ENCODE measurements at regions of chr7 and their contacts with region 1.

Region 1: DNA sequence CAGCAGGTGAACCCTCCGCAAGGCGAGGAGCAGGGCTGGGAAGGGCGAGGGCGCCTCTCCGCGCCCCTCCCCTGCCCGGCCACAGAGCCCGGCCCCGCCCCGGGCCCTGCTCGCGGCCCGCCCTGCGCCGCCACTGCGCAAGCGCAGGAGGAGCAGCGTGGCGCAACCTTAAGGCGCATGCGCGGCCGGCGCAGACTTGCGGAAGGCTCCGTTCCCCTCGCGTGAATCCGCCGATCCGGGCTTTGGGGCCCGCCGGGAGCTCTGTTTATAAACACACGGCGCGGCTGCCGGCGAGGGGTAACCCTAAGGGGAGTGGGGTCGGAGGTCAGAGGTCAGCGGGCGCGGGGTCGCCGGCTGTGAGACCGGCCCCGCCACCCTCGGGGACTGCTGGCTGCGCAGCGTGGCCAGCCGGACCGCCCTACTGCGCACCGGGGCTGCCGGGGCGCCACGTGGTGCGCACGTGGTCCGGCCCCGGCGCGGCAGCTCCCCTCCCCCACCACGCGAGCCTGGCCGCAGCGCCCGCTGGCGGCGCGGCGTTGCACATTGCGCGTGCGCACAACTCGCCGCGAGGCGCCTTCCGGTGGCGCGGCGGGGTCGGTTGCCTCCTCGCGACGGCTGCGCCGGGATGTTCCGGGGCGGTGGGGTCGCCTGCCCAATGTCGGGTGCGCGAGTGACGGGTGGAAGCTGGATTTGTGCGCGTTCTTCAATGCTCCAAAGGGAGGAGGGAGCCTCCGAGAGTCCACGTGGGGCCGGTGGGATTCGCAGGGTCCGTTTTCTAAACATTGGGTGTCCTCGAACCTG is 40.2 kb upstream of the FOXK1 start:
- DNase-seq: peak; percentile 96
- ATAC-seq: peak; percentile 97 to 98

Region 2: GRCh38 chr7:4744391-4745264 is 102.8 kb after region 1 on chr7:
- intact Hi-C with region 1: loop called in 1 of 2 experiments (anchors 5 kb)
- DNase-seq: peak; percentile 99
- ATAC-seq: peak; percentile 94 to 95

Region 3: GRCh38 chr7:4973728-4974198 is 331.9 kb after region 1 on chr7:
- intact Hi-C with region 1: no loop called
- DNase-seq: peak; percentile 93
- ATAC-seq: peak; percentile 98

Measured in left cardiac atrium (tissue), 4 donors.